ENCODE measurements at regions of chr20 and their contacts with region 1.

Region 1: GRCh38 chr20:41095110-41095969 is 42.0 kb upstream of the PLCG1 start:
- DNase-seq: no peak
- H3K4me3 ChIP-seq: no peak overlapping the region
- H3K27ac ChIP-seq: no peak overlapping the region
- H3K4me1 ChIP-seq: no peaks in the 10 kb centered on the region
- H3K27me3 ChIP-seq: no peaks in the 10 kb centered on the region
- CTCF ChIP-seq: peak; percentile 71 to 78

Region 2: GRCh38 chr20:40970201-40970600 is 125.1 kb before region 1 on chr20:
- CTCF ChIA-PET with region 1: no interaction called
- dilution Hi-C with region 1: no loop called
- in situ Hi-C with region 1: no loop called
- intact Hi-C with region 1: loop called (anchors 1 kb)
- DNase-seq: no peak
- H3K4me3 ChIP-seq: no peak overlapping the region
- H3K27ac ChIP-seq: no peak overlapping the region
- H3K4me1 ChIP-seq: peaks cover 8% of the 10 kb centered on the region
- H3K27me3 ChIP-seq: no peaks in the 10 kb centered on the region
- CTCF ChIP-seq: peak in 1 of 2 donors; percentile 41

Region 3: GRCh38 chr20:40980106-40980827 is 115.1 kb before region 1 on chr20:
- CTCF ChIA-PET with region 1: no interaction called
- dilution Hi-C with region 1: no loop called
- in situ Hi-C with region 1: loop called in 1 of 2 experiments (anchors 10 kb)
- intact Hi-C with region 1: no loop called
- DNase-seq: no peak
- H3K4me3 ChIP-seq: no peak overlapping the region
- H3K27ac ChIP-seq: no peak overlapping the region
- H3K4me1 ChIP-seq: peaks cover 19% of the 10 kb centered on the region
- H3K27me3 ChIP-seq: no peaks in the 10 kb centered on the region
- CTCF ChIP-seq: no peak

Region 4: DNA sequence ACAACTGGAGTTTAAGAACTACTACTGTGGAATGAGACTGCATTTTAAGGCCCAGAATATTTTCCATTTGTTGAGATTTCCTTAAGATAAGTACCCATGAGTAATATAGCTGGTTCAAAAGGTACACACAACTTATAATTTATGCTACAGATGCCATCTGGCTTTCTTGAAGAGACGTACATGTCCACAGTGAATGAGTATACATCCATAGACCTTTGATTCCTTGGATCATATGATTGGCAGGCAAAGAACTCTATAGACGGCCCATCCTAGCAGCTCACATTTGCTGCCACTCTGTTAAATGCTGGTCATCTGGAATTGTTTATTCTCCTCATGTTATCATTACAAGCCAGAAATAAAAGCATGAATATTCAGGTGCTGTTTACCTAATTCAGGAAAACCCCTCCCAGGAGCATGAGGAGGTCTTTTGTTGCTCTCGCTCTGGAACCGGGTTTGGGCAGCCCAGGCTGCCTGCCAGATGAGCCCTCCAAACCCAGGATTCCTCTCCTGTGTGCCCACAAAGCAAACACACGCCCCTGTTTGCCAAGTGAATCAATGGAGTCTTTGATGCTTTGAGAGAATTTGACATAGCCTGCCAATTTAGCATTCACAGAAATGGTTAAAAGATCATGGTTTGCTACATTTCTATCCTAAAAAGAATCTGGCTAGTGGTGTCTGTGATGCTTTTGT is 24.4 kb after region 1 on chr20:
- CTCF ChIA-PET with region 1: no interaction called
- dilution Hi-C with region 1: no loop called
- in situ Hi-C with region 1: no loop called
- intact Hi-C with region 1: no loop called
- DNase-seq: no peak
- H3K4me3 ChIP-seq: no peak overlapping the region
- H3K27ac ChIP-seq: no peak overlapping the region
- H3K4me1 ChIP-seq: no peaks in the 10 kb centered on the region
- H3K27me3 ChIP-seq: no peaks in the 10 kb centered on the region
- CTCF ChIP-seq: no peak